A549 (cell line): ENCODE measurements at regions of chr5 and their contacts with region 1.

Region 1: GRCh38 chr5:119229950-119230349 is 125.9 kb upstream of the TNFAIP8 start:
- DNase-seq: no peak
- ATAC-seq: no peak
- H3K4me3 ChIP-seq: no peak overlapping the region
- H3K27ac ChIP-seq: no peak overlapping the region
- H3K4me1 ChIP-seq: peaks cover 13% of the 10 kb centered on the region
- CTCF ChIP-seq: no peak
- EP300 ChIP-seq: no peak
- POLR2A ChIP-seq: no peak
- RAD21 ChIP-seq: no peak

Region 2: DNA sequence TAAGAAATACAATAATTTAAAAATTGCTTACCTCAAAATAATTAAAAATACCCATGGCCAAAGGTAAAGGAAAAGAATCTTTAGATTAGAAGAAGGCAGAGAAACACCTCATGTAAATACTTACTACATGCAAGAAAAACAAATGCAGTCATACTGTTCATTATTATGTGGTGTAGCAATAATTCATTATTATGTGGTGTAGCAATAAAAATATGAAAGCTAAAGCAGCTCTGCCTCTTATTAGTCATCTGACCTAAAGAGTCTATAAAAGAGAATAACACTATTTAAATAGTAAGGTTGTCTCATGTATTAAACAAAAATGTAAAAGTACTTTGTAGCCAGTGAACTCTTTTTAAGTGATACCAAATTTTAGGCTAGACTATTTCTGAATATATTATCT is 248.2 kb before region 1 on chr5:
- CTCF ChIA-PET with region 1: no interaction called
- POLR2A ChIA-PET with region 1: no interaction called
- DNase-seq: no peak
- ATAC-seq: no peak
- H3K4me3 ChIP-seq: no peak overlapping the region
- H3K27ac ChIP-seq: no peak overlapping the region
- H3K4me1 ChIP-seq: peaks cover 4% of the 10 kb centered on the region; the same call in 1 of the 3 replicates
- CTCF ChIP-seq: no peak
- EP300 ChIP-seq: no peak
- POLR2A ChIP-seq: no peak
- RAD21 ChIP-seq: no peak

Region 3: GRCh38 chr5:119187776-119188529 is 42.0 kb before region 1 on chr5:
- CTCF ChIA-PET with region 1: no interaction called
- POLR2A ChIA-PET with region 1: no interaction called
- DNase-seq: no peak
- ATAC-seq: no peak
- H3K4me3 ChIP-seq: no peak overlapping the region
- H3K27ac ChIP-seq: no peak overlapping the region
- H3K4me1 ChIP-seq: no peaks in the 10 kb centered on the region
- CTCF ChIP-seq: no peak
- EP300 ChIP-seq: no peak
- POLR2A ChIP-seq: no peak
- RAD21 ChIP-seq: no peak

Region 4: GRCh38 chr5:119290161-119290569 is 60.2 kb after region 1 on chr5:
- CTCF ChIA-PET with region 1: no interaction called
- POLR2A ChIA-PET with region 1: no interaction called
- DNase-seq: no peak
- ATAC-seq: no peak
- H3K4me3 ChIP-seq: no peak overlapping the region
- H3K27ac ChIP-seq: peak overlapping the region; percentile 8 to 51; a peak in 2 of 6 replicates
- H3K4me1 ChIP-seq: peaks cover 74% of the 10 kb centered on the region
- CTCF ChIP-seq: no peak
- EP300 ChIP-seq: no peak
- POLR2A ChIP-seq: no peak
- RAD21 ChIP-seq: no peak

Region 5: DNA sequence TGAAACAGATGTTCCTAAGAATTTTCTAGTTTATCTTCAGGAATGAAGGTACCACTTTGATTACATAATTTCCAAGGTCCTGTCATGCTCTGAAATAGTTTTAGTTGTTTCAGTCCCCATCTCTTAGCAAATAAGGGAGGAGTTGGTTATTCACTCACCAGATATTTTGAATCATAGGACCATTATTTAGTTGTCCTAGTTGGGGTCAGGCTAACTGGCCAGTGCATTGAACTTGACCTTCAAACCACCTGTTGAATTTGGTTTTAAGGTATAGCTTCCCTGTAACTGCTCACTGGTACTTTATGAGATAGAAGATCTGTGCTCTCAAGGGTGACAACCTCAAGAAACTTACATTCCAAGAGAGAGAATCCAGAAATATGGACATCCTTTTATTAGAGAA is 72.0 kb after region 1 on chr5:
- CTCF ChIA-PET with region 1: no interaction called
- POLR2A ChIA-PET with region 1: no interaction called
- DNase-seq: peak in 1 of 2 experiments; percentile 24
- ATAC-seq: no peak
- H3K4me3 ChIP-seq: no peak overlapping the region
- H3K27ac ChIP-seq: peak overlapping the region; percentile 82 to 89
- H3K4me1 ChIP-seq: peaks cover 66% of the 10 kb centered on the region
- CTCF ChIP-seq: no peak
- EP300 ChIP-seq: no peak
- POLR2A ChIP-seq: no peak
- RAD21 ChIP-seq: no peak

Region 6: DNA sequence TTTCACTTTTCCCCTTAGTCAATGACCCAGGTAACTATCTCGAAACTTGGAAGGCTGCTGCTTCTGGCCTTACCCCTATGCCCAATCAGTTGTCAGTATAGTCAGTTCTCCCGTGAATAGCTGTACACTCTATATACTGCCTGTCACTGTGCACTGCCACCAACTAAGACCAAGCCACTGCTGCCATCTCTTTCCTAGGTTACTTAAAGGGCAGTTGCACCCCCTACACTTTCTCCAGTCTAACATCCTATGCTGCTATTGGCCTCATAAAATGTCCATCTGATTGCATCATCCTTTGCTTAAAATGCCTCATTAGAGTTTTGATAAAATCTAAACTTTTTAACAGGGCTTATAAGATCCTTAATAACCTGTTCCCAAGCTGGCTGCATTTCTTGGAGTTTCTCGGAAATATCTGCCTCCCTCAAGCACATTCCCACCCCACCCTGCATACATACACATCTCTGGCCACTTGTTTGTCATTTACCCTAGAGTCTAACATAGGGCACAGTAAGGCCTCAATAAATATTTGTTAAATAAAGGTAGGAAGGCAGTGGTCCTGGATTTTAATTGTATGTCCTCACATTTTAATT is 93.1 kb after region 1 on chr5:
- CTCF ChIA-PET with region 1: no interaction called
- POLR2A ChIA-PET with region 1: interaction called, 10 read pairs
- DNase-seq: peak in 1 of 2 experiments; percentile 45
- ATAC-seq: peak in 1 of 2 experiments; percentile 11; a peak in 2 of 6 replicates
- H3K4me3 ChIP-seq: no peak overlapping the region
- H3K27ac ChIP-seq: peak overlapping the region; percentile 86 to 93
- H3K4me1 ChIP-seq: peaks cover 60% of the 10 kb centered on the region
- CTCF ChIP-seq: no peak
- EP300 ChIP-seq: no peak
- POLR2A ChIP-seq: no peak
- RAD21 ChIP-seq: no peak